Gastrocnemius medialis (tissue), 4 donors: ENCODE measurements at regions of chrX and their contacts with region 1.

Region 1: DNA sequence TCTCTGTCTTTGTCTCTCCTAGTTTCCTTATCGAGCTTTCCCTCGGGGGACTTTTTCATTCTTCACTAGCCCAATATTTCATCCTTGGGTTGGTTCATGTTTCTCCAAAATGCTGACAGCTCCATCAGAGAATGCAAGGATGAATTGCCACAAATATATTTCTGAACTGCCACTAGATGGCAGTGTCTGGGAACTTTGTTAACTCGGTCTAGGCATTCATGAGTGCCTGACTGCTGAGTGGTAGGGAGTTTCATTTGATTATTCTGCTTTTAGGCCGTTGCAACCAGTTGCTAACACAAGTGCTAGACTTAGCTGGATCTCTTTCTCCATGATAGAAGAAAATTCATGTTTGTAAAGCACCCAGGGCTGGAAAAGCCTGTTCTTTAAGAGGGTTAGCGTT is 73.5 kb upstream of the RAP2C start:
- DNase-seq: peak in 1 of 2 donors; percentile 2
- ATAC-seq: peak; percentile 36 to 66
- H3K4me3 ChIP-seq: no peak overlapping the region
- H3K27ac ChIP-seq: no peak overlapping the region
- H3K4me1 ChIP-seq: no peaks in the 10 kb centered on the region
- H3K27me3 ChIP-seq: no peaks in the 10 kb centered on the region
- CTCF ChIP-seq: peak in 4 of 5 experiments; percentile 20 to 64 (median 56)
- POLR2A ChIP-seq: no peak

Region 2: DNA sequence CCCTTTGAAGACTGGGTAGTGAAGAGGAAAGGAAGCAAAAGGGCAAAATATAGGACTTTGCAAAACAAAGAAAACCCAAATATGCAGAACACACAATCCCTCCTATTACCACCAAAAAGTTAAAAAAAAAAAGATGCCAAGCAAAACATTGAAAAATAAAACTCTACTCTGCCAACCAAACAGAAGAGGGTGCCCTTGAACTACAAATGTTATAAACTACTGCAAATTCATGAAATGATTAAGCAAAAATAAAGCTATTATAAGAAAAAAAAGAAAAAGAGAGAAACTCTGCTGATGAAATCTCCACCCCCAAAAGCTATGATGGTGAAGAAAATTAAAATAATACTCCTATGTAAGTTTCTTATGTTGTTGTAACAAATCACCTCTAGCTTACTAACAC is 438.2 kb before region 1 on chrX:
- in situ Hi-C with region 1: no loop called
- intact Hi-C with region 1: no loop called
- DNase-seq: no peak
- ATAC-seq: no peak
- H3K4me3 ChIP-seq: no peak overlapping the region
- H3K27ac ChIP-seq: no peak overlapping the region
- H3K4me1 ChIP-seq: no peaks in the 10 kb centered on the region
- H3K27me3 ChIP-seq: no peaks in the 10 kb centered on the region
- CTCF ChIP-seq: no peak
- POLR2A ChIP-seq: no peak

Region 3: GRCh38 chrX:132452911-132453550 is 160.2 kb after region 1 on chrX:
- in situ Hi-C with region 1: no loop called
- intact Hi-C with region 1: no loop called
- DNase-seq: no peak
- ATAC-seq: no peak
- H3K4me3 ChIP-seq: no peak overlapping the region
- H3K27ac ChIP-seq: no peak overlapping the region
- H3K4me1 ChIP-seq: no peaks in the 10 kb centered on the region
- H3K27me3 ChIP-seq: no peaks in the 10 kb centered on the region
- CTCF ChIP-seq: no peak
- POLR2A ChIP-seq: no peak

Region 4: DNA sequence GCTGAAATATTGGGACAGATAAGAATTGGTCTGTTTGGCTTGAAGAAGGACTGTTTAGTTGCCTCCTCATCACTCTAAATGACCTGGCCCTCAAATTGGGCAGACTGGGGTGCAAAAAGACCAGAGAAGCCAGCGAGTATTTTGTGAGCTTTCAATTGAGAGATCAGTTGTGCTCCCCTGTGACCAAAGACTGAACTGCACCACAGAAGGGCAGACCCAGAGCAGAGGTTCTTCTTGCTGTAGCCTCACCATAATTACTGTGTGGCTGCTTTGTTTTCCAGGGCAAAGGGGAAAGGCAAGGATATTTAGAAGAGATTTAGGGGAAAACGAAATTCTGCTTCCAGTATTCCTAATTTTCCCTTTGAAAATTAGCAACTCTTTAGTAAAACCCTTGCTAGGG is 300.1 kb after region 1 on chrX:
- in situ Hi-C with region 1: no loop called
- intact Hi-C with region 1: loop called (anchors 5 kb)
- DNase-seq: no peak
- ATAC-seq: no peak
- H3K4me3 ChIP-seq: no peak overlapping the region
- H3K27ac ChIP-seq: no peak overlapping the region
- H3K4me1 ChIP-seq: no peaks in the 10 kb centered on the region
- H3K27me3 ChIP-seq: no peaks in the 10 kb centered on the region
- CTCF ChIP-seq: peak in 2 of 5 experiments; percentile 18 to 25
- POLR2A ChIP-seq: no peak

Region 5: GRCh38 chrX:132609394-132609793 is 316.6 kb after region 1 on chrX:
- in situ Hi-C with region 1: loop called in 3 of 4 experiments (anchors 10 to 25 kb)
- intact Hi-C with region 1: loop called (anchors 2 kb)
- DNase-seq: no peak
- ATAC-seq: no peak
- H3K4me3 ChIP-seq: no peak overlapping the region
- H3K27ac ChIP-seq: no peak overlapping the region
- H3K4me1 ChIP-seq: no peaks in the 10 kb centered on the region
- H3K27me3 ChIP-seq: peaks cover 0 to 3% (median 0%) of the 10 kb centered on the region in 3 donors
- CTCF ChIP-seq: no peak
- POLR2A ChIP-seq: no peak

Region 6: DNA sequence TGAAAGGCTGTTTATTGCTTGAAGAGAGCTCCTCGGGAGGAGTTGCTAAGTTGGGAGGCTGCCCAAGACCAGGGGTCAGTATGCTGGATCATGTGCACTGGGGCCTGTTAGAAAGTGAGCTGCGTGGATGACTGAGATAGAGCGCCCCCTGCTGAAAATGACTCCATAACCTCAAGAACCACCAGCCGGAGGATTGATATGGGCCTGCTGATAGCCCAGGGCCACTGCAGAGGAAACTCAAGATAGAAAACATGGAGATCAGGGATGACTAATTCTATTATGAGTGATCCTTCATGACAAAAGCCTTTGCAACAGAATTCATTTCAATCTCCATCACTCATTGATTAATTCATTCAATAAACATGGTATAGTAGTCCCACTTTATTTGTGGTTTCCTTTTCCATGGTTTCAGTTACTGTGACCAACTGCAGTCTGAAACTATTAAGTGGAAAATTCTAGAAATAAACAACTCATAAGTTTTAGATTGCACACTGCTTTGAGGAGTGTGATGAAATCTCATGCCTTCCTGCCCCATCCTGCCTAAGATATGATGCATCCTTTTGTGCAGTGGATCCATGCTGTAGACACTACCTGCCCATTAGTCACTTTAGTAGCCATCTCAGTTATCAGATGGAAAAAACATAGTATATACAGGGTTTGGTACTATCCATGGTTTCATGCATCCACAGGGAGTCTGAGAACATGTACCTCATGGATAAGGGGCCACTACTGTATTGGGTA is 322.8 kb after region 1 on chrX:
- in situ Hi-C with region 1: loop called in 2 of 4 experiments (anchors 10 to 25 kb)
- intact Hi-C with region 1: loop called (anchors 2 kb)
- DNase-seq: no peak
- ATAC-seq: no peak
- H3K4me3 ChIP-seq: no peak overlapping the region
- H3K27ac ChIP-seq: no peak overlapping the region
- H3K4me1 ChIP-seq: no peaks in the 10 kb centered on the region
- H3K27me3 ChIP-seq: no peaks in the 10 kb centered on the region
- CTCF ChIP-seq: peak in 1 of 5 experiments; percentile 22
- POLR2A ChIP-seq: no peak

Region 7: DNA sequence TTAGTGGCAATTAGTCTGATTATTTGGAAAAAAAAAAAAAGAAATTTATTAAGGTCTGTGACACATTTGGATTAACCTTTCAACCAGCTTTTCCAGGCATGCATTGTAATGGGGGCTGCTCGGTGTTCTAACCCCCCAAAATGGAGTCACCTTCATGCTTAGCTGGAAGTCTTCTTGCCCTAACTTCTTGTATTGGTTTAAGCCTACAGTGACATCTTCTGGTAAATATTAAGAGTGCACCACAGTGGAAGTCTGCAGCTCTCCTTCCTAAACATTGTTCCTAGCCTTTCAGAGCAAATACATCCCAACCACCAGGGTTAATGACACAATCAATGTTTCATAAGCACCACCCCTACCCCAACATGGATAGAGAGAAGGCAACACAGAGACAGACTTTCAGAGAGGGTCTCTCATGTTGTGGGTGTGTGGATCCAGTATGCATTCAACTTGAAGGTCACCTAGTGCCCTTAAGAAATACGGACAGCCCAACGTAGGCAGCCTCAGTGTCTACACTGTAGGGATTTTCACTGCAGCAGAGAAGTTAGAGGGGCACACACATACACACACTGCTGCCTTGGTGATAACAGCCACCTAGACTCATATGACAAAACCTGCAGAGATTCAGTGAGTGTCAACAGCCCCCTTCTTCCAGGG is 338.9 kb after region 1 on chrX:
- in situ Hi-C with region 1: loop called in 2 of 4 experiments (anchors 10 to 25 kb)
- intact Hi-C with region 1: no loop called
- DNase-seq: no peak
- ATAC-seq: peak in 1 of 2 donors; percentile 33
- H3K4me3 ChIP-seq: no peak overlapping the region
- H3K27ac ChIP-seq: no peak overlapping the region
- H3K4me1 ChIP-seq: no peaks in the 10 kb centered on the region
- H3K27me3 ChIP-seq: no peaks in the 10 kb centered on the region
- CTCF ChIP-seq: peak in 4 of 5 experiments; percentile 7 to 50 (median 28)
- POLR2A ChIP-seq: no peak